IMR-90 (cell line): ENCODE measurements at regions of chr4 and their contacts with region 1.

Region 1: GRCh38 chr4:103091601-103092223 is 7.9 kb downstream of the BDH2 start:
- DNase-seq: peak; percentile 79
- ATAC-seq: peak; percentile 77
- H3K4me3 ChIP-seq: no peak overlapping the region
- H3K27ac ChIP-seq: no peak overlapping the region
- H3K4me1 ChIP-seq: peaks cover 2% of the 10 kb centered on the region; the same call in 1 of the 2 replicates
- H3K27me3 ChIP-seq: no peaks in the 10 kb centered on the region
- CTCF ChIP-seq: peak; percentile 85
- POLR2A ChIP-seq: no peak
- RAD21 ChIP-seq: peak; percentile 88

Region 2: GRCh38 chr4:102483120-102483519 is 608.6 kb before region 1 on chr4:
- CTCF ChIA-PET with region 1: no interaction called
- POLR2A ChIA-PET with region 1: no interaction called
- dilution Hi-C with region 1: no loop called
- in situ Hi-C with region 1: no loop called
- intact Hi-C with region 1: no loop called
- DNase-seq: no peak
- ATAC-seq: no peak
- H3K4me3 ChIP-seq: no peak overlapping the region
- H3K27ac ChIP-seq: no peak overlapping the region
- H3K4me1 ChIP-seq: no peaks in the 10 kb centered on the region
- H3K27me3 ChIP-seq: no peaks in the 10 kb centered on the region
- CTCF ChIP-seq: no peak
- POLR2A ChIP-seq: no peak
- RAD21 ChIP-seq: no peak

Region 3: GRCh38 chr4:103046416-103047290 is 45.1 kb before region 1 on chr4:
- CTCF ChIA-PET with region 1: interaction called, 5 read pairs
- POLR2A ChIA-PET with region 1: no interaction called
- dilution Hi-C with region 1: no loop called
- in situ Hi-C with region 1: no loop called
- intact Hi-C with region 1: loop called (anchors 5 kb)
- DNase-seq: peak; percentile 46
- ATAC-seq: peak; percentile 87
- H3K4me3 ChIP-seq: no peak overlapping the region
- H3K27ac ChIP-seq: no peak overlapping the region
- H3K4me1 ChIP-seq: peaks cover 1% of the 10 kb centered on the region; the same call in 1 of the 2 replicates
- H3K27me3 ChIP-seq: no peaks in the 10 kb centered on the region
- CTCF ChIP-seq: peak; percentile 55
- POLR2A ChIP-seq: no peak
- RAD21 ChIP-seq: peak; percentile 42

Region 4: DNA sequence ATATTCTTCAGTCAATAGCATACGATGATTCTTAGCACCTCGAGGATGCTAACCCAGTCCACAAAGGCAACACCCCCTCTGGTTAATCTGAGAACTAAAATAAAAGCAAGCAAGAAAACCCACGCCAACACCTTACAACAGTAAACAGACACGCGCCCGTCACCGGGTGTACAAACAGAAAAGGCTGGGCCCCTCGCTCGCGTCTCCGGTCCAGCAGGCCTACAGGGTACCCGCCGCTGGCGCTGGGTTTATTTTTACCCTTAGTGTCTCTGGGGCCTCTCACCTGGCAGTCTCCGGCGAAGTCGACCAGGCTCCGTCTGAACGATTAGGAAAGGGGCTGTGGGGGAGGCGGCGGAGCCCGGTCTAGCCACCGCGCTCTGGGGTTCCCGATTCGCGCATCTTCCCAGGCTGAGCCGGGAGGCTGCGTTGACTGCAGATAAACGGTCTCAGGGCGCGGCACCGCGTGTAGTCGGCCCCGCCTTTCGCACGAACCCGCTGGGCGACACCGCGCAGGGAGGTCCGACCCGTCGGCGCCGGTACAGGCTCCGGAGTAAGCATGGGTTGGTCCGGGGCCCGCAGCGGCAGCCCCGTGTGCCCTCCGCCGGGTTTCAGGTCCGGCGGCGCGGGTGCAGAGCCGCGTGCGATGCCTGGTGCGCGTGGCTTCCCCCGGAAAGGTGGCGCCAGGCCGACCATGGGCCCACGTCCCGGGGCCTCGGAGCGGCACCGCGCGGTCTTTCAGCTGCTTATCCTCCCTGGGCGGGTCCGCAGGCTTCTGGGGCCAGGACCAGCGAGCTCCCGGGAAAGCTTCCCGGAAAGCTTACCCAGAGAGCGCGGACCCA is 15.6 kb before region 1 on chr4:
- CTCF ChIA-PET with region 1: interaction called, 13 read pairs
- POLR2A ChIA-PET with region 1: interaction called, 7 read pairs
- dilution Hi-C with region 1: no loop called
- in situ Hi-C with region 1: no loop called
- intact Hi-C with region 1: no loop called
- DNase-seq: peak; percentile 56
- ATAC-seq: peak; percentile 80
- H3K4me3 ChIP-seq: peak overlapping the region; percentile 76
- H3K27ac ChIP-seq: peak overlapping the region; percentile 71
- H3K4me1 ChIP-seq: peaks cover 2% of the 10 kb centered on the region; the same call in 1 of the 2 replicates
- H3K27me3 ChIP-seq: no peaks in the 10 kb centered on the region
- CTCF ChIP-seq: no peak
- POLR2A ChIP-seq: no peak; the same call in 1 of the 2 replicates
- RAD21 ChIP-seq: no peak

Region 5: GRCh38 chr4:103664436-103665075 is 572.8 kb after region 1 on chr4:
- CTCF ChIA-PET with region 1: no interaction called
- POLR2A ChIA-PET with region 1: no interaction called
- dilution Hi-C with region 1: no loop called
- in situ Hi-C with region 1: no loop called
- intact Hi-C with region 1: no loop called
- DNase-seq: no peak
- ATAC-seq: no peak
- H3K4me3 ChIP-seq: no peak overlapping the region
- H3K27ac ChIP-seq: no peak overlapping the region
- H3K4me1 ChIP-seq: no peaks in the 10 kb centered on the region
- H3K27me3 ChIP-seq: no peaks in the 10 kb centered on the region
- CTCF ChIP-seq: no peak
- POLR2A ChIP-seq: no peak
- RAD21 ChIP-seq: no peak